Activated CD4-positive, alpha-beta T cell treated with anti-CD3 and anti-CD28 coated beads for 36 hours (primary cell): ENCODE measurements at regions of chr7 and their contacts with region 1.

Region 1: GRCh38 chr7:134276951-134277350 is 39.8 kb downstream of the SLC35B4 start:
- DNase-seq: no peak
- ATAC-seq: no peak
- H3K4me3 Mint-ChIP-seq: no peak overlapping the region
- H3K27ac Mint-ChIP-seq: no peak overlapping the region
- H3K4me1 Mint-ChIP-seq: no peaks in the 10 kb centered on the region
- H3K27me3 Mint-ChIP-seq: peaks cover 30% of the 10 kb centered on the region

Region 2: GRCh38 chr7:134307320-134307719 is 30.4 kb after region 1 on chr7:
- CTCF ChIA-PET with region 1: no interaction called
- POLR2A ChIA-PET with region 1: no interaction called
- intact Hi-C with region 1: no loop called
- DNase-seq: no peak
- ATAC-seq: no peak
- H3K4me3 Mint-ChIP-seq: no peak overlapping the region
- H3K27ac Mint-ChIP-seq: no peak overlapping the region
- H3K4me1 Mint-ChIP-seq: no peaks in the 10 kb centered on the region
- H3K27me3 Mint-ChIP-seq: no peaks in the 10 kb centered on the region

Region 3: DNA sequence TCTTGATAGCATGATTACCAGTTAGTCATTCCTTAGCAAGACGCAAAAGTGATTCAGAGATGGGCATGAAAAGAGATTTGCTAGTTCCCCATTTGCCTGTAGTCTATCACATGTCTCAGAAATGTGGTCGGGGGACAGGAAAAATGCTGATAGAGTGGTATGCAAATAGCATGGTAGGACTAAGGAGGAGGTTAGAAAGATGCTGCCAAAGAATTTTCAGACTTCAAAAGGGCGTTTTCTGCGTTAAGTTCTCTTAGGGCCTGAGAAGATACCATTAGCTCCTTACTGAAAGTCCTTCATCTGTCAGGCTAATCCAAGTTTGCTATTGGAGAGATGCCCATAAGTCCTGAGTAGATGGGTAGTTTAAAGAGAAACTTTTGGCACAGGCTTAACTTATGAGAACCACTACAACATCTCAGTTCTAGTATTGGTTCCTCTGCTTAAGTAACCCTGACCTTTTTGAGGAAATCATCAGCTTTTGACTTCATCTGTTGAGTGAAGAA is 505.2 kb after region 1 on chr7:
- CTCF ChIA-PET with region 1: no interaction called
- POLR2A ChIA-PET with region 1: no interaction called
- intact Hi-C with region 1: loop called in 1 of 2 experiments (anchors 5 kb)
- DNase-seq: no peak
- ATAC-seq: peak; percentile 30
- H3K4me3 Mint-ChIP-seq: no peak overlapping the region
- H3K27ac Mint-ChIP-seq: no peak overlapping the region
- H3K4me1 Mint-ChIP-seq: no peaks in the 10 kb centered on the region
- H3K27me3 Mint-ChIP-seq: no peaks in the 10 kb centered on the region